CD8-positive, alpha-beta T cell (primary cell): ENCODE measurements at regions of chr1 and their contacts with region 1.

Region 1: DNA sequence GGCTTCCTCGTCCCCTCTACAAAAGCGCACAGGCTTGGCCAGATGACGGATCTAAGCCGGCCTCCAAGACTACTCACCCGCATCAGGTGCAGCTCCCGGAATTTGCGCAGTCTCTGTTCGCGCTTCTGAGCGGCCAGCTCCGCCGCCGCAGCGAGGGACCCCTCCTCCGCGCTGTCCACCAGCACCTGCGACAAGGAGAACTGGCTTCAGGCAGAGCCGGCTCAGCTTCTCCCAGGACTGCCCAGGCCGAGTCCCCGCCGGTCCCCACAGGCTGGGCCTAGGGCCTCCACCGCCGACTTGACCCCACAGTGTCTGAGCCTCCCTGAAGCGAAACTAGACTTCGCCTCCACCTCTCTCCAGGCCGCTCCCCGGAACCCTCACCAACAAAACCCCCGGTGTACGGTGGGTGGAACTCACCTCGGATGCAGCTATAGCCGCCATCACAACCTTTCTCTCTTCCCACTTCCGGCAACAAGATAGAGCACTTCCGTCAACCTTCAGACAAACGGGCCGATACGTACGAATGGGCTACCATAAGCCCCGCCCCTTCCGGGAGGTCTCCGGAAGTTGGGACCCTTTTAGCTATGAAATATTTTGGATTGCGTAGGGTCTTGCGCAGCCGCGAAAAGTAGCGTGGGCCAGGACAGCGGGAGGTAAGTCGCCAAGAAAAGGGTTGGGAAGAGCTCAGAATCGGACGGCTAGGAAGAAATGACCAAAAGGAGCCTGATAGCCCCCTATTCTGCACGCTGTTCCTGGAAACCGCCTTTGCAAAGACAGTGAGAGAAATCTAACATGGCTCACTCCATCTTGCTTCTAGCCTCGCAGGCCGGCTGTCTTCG is at the start of gene SYF2:
- DNase-seq: peak; percentile 77 to 98 (median 93)
- ATAC-seq: peak; percentile 87
- H3K4me3 ChIP-seq: peak within 1 kb of the TSS; percentile 60 to 92
- H3K4me3 Mint-ChIP-seq: no peak within 1 kb of the TSS
- H3K27ac ChIP-seq: peak within 1 kb of the TSS; percentile 94 to 97
- H3K27ac Mint-ChIP-seq: no peak within 1 kb of the TSS
- H3K4me1 ChIP-seq: peaks cover 23% of the 10 kb centered on the region
- H3K4me1 Mint-ChIP-seq: peaks cover 38% of the 10 kb centered on the region
- H3K27me3 ChIP-seq: no peaks in the 10 kb centered on the region
- H3K27me3 Mint-ChIP-seq: no peaks in the 10 kb centered on the region
- CTCF ChIP-seq: no peak
- total RNA-seq, gene SYF2: 103 to 118 TPM

Region 2: DNA sequence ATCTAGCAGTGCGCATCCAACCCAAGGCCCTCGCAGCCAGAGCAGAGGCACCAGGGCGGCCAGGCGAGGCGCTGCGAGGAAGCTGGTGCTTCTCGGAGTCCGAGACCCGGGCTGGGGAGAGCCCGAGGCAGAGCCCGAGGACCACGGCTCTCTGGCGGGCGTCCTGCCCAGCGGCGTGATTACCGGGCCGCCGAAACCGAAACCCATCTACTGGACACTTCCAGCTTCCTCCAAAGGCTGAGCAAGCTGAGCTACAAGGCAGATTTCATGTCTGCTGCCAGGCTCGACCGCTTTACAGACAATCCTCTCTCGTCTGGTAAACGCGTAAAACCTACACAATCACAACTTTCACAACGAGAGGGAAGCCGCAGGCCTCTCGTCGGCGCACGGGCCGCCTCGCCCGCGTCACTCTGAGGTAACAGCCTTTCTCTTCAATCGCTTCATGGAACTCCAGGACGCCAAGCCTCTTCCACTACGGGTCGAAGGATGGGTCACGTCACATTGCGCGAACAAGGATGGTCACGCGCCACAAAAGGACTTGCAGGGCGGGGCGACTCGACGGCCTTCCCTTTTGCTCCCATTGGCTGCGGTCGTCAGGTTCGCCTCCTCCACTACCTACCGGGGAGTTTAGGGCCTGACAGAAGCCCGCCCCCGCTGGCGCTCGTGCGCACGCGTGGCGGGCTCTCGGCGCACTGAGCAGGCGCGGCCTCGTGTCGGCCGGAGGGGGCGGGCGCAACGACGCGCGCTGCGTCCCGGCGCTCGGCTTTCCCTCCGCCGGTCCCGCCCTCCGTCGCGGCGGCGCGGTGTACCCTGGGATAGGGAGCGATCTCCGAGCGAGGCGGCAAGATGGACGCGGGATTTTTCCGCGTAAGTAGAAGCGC is 589.5 kb before region 1 on chr1 and contains the start of gene SRRM1:
- CTCF ChIA-PET with region 1: no interaction called
- POLR2A ChIA-PET with region 1: interaction called, 4 read pairs
- intact Hi-C with region 1: loop called (anchors 1 to 10 kb)
- DNase-seq: peak; percentile 96 to 100 (median 98)
- ATAC-seq: peak; percentile 86
- H3K4me3 ChIP-seq: peak within 1 kb of the TSS; percentile 89 to 98
- H3K4me3 Mint-ChIP-seq: peak within 1 kb of the TSS; percentile 88
- H3K27ac ChIP-seq: peak within 1 kb of the TSS; percentile 98 to 100
- H3K27ac Mint-ChIP-seq: peak within 1 kb of the TSS; percentile 99
- H3K4me1 ChIP-seq: peaks cover 32% of the 10 kb centered on the region
- H3K4me1 Mint-ChIP-seq: peaks cover 41% of the 10 kb centered on the region
- H3K27me3 ChIP-seq: no peaks in the 10 kb centered on the region
- H3K27me3 Mint-ChIP-seq: no peaks in the 10 kb centered on the region
- CTCF ChIP-seq: no peak
- total RNA-seq, gene SRRM1: 460 to 474 TPM

Region 3: GRCh38 chr1:24673336-24673735 is 558.9 kb before region 1 on chr1:
- CTCF ChIA-PET with region 1: no interaction called
- POLR2A ChIA-PET with region 1: no interaction called
- intact Hi-C with region 1: no loop called
- DNase-seq: no peak
- ATAC-seq: no peak
- H3K4me3 ChIP-seq: no peak overlapping the region
- H3K4me3 Mint-ChIP-seq: no peak overlapping the region
- H3K27ac ChIP-seq: no peak overlapping the region
- H3K27ac Mint-ChIP-seq: peak overlapping the region; percentile 45
- H3K4me1 ChIP-seq: no peaks in the 10 kb centered on the region
- H3K4me1 Mint-ChIP-seq: no peaks in the 10 kb centered on the region
- H3K27me3 ChIP-seq: no peaks in the 10 kb centered on the region
- H3K27me3 Mint-ChIP-seq: no peaks in the 10 kb centered on the region
- CTCF ChIP-seq: no peak

Region 4: GRCh38 chr1:25065795-25066238 is 166.4 kb before region 1 on chr1:
- CTCF ChIA-PET with region 1: no interaction called
- POLR2A ChIA-PET with region 1: no interaction called
- intact Hi-C with region 1: no loop called
- DNase-seq: peak; percentile 35 to 94 (median 63)
- ATAC-seq: peak; percentile 74
- H3K4me3 ChIP-seq: peak overlapping the region; percentile 16 to 67
- H3K4me3 Mint-ChIP-seq: peak overlapping the region; percentile 78
- H3K27ac ChIP-seq: peak overlapping the region; percentile 57 to 79
- H3K27ac Mint-ChIP-seq: peak overlapping the region; percentile 92
- H3K4me1 ChIP-seq: peaks cover 25% of the 10 kb centered on the region
- H3K4me1 Mint-ChIP-seq: peaks cover 34% of the 10 kb centered on the region
- H3K27me3 ChIP-seq: no peaks in the 10 kb centered on the region
- H3K27me3 Mint-ChIP-seq: no peaks in the 10 kb centered on the region
- CTCF ChIP-seq: no peak

Region 5: GRCh38 chr1:25140073-25140797 is 92.0 kb before region 1 on chr1:
- CTCF ChIA-PET with region 1: no interaction called
- POLR2A ChIA-PET with region 1: no interaction called
- intact Hi-C with region 1: no loop called
- DNase-seq: peak in 2 of 9 experiments; percentile 13 to 49
- ATAC-seq: peak; percentile 34
- H3K4me3 ChIP-seq: no peak overlapping the region
- H3K4me3 Mint-ChIP-seq: no peak overlapping the region
- H3K27ac ChIP-seq: no peak overlapping the region
- H3K27ac Mint-ChIP-seq: no peak overlapping the region
- H3K4me1 ChIP-seq: no peaks in the 10 kb centered on the region
- H3K4me1 Mint-ChIP-seq: peaks cover 3% of the 10 kb centered on the region
- H3K27me3 ChIP-seq: peaks cover 0 to 9% of the 10 kb centered on the region in 2 experiments
- H3K27me3 Mint-ChIP-seq: peaks cover 24% of the 10 kb centered on the region
- CTCF ChIP-seq: no peak

Region 6: DNA sequence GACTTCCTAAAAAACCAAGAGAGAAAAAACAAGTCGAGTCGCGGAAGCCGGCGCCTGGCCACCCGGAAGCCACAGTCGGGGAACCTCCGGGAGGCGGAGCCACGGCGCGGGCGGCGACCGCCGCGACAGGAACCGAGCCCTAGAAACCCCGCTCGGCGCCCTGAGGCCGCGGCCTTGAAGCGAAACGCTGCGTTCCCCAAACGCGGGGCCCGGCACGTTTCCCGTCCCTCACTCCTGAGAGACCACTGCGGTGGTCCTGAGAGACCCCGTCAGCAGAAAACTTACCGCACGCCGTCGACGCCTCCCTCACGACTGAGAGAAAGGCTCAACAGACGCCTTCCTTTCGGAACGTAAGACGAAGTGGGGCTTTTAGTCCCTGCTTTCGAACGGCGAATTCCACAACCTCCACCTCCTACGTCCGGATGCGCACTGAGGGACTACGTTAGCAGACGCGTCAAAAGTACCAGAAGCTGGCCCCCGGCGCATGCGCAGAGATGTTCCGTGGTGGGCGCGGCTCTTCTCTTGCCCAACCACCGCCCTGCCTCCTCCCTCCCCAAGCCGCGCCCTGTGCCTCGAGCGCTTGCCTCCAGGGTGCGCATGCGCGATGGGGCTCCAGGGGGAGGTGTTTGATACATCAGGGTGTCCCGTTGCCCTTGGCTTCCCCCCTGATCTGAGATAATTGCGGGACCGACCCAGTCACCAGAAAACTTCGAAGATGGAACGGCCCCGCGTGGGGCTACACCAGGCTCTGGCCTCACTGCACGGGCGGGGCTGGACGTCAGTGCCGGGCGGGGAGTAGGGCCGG is 15.0 kb after region 1 on chr1 and contains the start of gene RSRP1:
- CTCF ChIA-PET with region 1: interaction called, 4 read pairs
- POLR2A ChIA-PET with region 1: interaction called, 131 read pairs
- intact Hi-C with region 1: loop called (anchors 1 kb)
- DNase-seq: peak; percentile 99 to 100 (median 100)
- ATAC-seq: peak; percentile 86
- H3K4me3 ChIP-seq: peak within 1 kb of the TSS; percentile 82
- H3K4me3 Mint-ChIP-seq: peak within 1 kb of the TSS; percentile 96
- H3K27ac ChIP-seq: peak within 1 kb of the TSS; percentile 97 to 99
- H3K27ac Mint-ChIP-seq: peak within 1 kb of the TSS; percentile 99
- H3K4me1 ChIP-seq: peaks cover 45% of the 10 kb centered on the region
- H3K4me1 Mint-ChIP-seq: peaks cover 43% of the 10 kb centered on the region
- H3K27me3 ChIP-seq: no peaks in the 10 kb centered on the region
- H3K27me3 Mint-ChIP-seq: no peaks in the 10 kb centered on the region
- CTCF ChIP-seq: no peak
- total RNA-seq, gene RSRP1: 472 to 482 TPM

Region 7: GRCh38 chr1:25338188-25338981 is 106.1 kb after region 1 on chr1 and contains the start of gene TMEM50A:
- CTCF ChIA-PET with region 1: no interaction called
- POLR2A ChIA-PET with region 1: interaction called, 10 read pairs
- intact Hi-C with region 1: loop called in 1 of 2 experiments (anchors 2 kb)
- DNase-seq: peak; percentile 87 to 95 (median 90)
- ATAC-seq: peak; percentile 72
- H3K4me3 ChIP-seq: peak within 1 kb of the TSS; percentile 67 to 86
- H3K4me3 Mint-ChIP-seq: peak within 1 kb of the TSS; percentile 95
- H3K27ac ChIP-seq: peak within 1 kb of the TSS; percentile 89
- H3K27ac Mint-ChIP-seq: peak within 1 kb of the TSS; percentile 97
- H3K4me1 ChIP-seq: peaks cover 24% of the 10 kb centered on the region
- H3K4me1 Mint-ChIP-seq: peaks cover 44% of the 10 kb centered on the region
- H3K27me3 ChIP-seq: no peaks in the 10 kb centered on the region
- H3K27me3 Mint-ChIP-seq: no peaks in the 10 kb centered on the region
- CTCF ChIP-seq: no peak
- total RNA-seq, gene TMEM50A: 103 to 118 TPM

Region 8: DNA sequence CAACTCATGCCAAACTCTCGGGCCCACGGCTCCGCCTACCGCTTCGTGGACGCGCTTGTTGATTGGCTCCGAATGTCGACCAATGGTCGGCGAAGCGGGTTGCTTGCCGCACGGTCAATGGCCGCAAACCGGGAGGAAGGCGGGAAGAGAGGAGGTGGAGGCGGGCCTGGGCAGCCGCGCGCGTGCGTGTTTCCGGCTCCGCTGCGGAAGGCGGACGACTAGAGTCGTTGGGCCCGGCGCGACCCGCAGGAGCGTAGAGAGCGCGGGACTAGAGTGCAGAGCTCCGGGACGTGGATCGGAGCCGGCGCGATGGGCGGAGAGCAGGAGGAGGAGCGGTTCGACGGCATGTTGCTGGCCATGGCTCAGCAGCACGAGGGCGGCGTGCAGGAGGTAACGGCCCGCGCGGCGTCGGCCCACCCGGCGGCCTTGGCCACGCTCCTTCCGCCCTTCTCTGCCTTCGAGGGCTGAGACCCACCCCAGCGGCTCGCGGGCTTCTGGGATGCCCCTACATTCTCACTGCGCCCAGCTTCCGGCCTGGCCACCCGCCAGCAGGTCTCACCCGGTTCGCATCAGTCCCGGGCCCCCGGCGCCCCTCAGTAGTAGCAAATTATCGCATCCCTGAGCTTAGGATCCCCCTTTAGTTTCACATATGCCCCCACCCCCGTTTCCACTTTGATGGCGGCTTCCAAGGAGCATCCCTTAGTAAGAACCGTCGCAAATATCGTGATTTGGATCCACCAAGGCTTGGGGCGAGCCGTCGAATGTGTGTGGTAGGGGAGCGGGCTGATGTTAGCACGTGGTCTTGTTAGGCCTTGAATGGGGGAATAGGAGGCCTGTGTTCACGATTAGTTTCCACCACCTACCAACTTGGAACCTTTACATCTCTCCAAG is 1689.5 kb after region 1 on chr1 and contains the start of gene NUDC:
- CTCF ChIA-PET with region 1: no interaction called
- POLR2A ChIA-PET with region 1: no interaction called
- intact Hi-C with region 1: loop called in 1 of 2 experiments (anchors 5 kb)
- DNase-seq: peak; percentile 91 to 98 (median 94)
- ATAC-seq: peak; percentile 92
- H3K4me3 ChIP-seq: peak within 1 kb of the TSS; percentile 84 to 95
- H3K4me3 Mint-ChIP-seq: peak within 1 kb of the TSS; percentile 95
- H3K27ac ChIP-seq: peak within 1 kb of the TSS; percentile 87 to 90
- H3K27ac Mint-ChIP-seq: peak within 1 kb of the TSS; percentile 99
- H3K4me1 ChIP-seq: peaks cover 23% of the 10 kb centered on the region
- H3K4me1 Mint-ChIP-seq: peaks cover 34% of the 10 kb centered on the region
- H3K27me3 ChIP-seq: no peaks in the 10 kb centered on the region
- H3K27me3 Mint-ChIP-seq: no peaks in the 10 kb centered on the region
- CTCF ChIP-seq: no peak
- total RNA-seq, gene NUDC: 51.9 to 55.0 TPM